Activated naive CD4-positive, alpha-beta T cell treated with anti-CD3 and anti-CD28 coated beads, Interleukin-2, amount 10 ng/mL, durations not matched to agents 7 days and 5 days (primary cell): ENCODE measurements at regions of chr10 and their contacts with region 1.

Region 1: GRCh38 chr10:14536241-14537213 is 205.8 kb upstream of the FRMD4A start:
- DNase-seq: peak; percentile 61
- H3K4me3 Mint-ChIP-seq: no peak overlapping the region
- H3K27ac Mint-ChIP-seq: no peak overlapping the region
- H3K4me1 Mint-ChIP-seq: peaks cover 73% of the 10 kb centered on the region
- H3K27me3 Mint-ChIP-seq: no peaks in the 10 kb centered on the region

Region 2: GRCh38 chr10:14822879-14823755 is 286.6 kb after region 1 on chr10:
- CTCF ChIA-PET with region 1: interaction called, 32 read pairs
- DNase-seq: peak; percentile 59
- H3K4me3 Mint-ChIP-seq: no peak overlapping the region
- H3K27ac Mint-ChIP-seq: no peak overlapping the region
- H3K4me1 Mint-ChIP-seq: peaks cover 5% of the 10 kb centered on the region
- H3K27me3 Mint-ChIP-seq: peaks cover 10% of the 10 kb centered on the region